ENCODE measurements at regions of chr16 and their contacts with region 1.

Region 1: DNA sequence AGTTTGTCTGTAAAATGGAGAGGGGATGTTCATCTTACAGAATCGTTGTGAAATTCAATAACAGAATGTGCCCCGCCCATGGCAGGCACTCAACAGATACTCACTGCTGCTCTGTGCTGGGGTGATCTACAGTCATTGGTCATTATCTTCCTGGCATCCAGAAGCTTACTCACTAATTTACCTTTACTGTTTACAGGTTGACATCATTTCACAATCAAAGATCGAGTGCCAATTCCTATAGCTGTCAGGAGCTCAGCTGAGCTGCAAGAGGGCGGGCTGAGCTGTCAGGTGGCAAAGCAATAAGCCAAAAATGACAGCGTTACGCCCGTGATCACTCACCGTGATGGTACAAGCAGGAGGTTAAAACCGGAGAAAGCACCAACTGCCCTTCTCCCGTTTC is 51.2 kb downstream of the LITAF start:
- DNase-seq: no peak
- ATAC-seq: no peak
- H3K4me3 ChIP-seq: no peak overlapping the region
- H3K4me3 Mint-ChIP-seq: no peak overlapping the region
- H3K27ac ChIP-seq: no peak overlapping the region
- H3K27ac Mint-ChIP-seq: no peak overlapping the region
- H3K4me1 ChIP-seq: peaks cover 5% of the 10 kb centered on the region
- H3K4me1 Mint-ChIP-seq: peaks cover 16% of the 10 kb centered on the region
- H3K27me3 ChIP-seq: no peaks in the 10 kb centered on the region
- H3K27me3 Mint-ChIP-seq: no peaks in the 10 kb centered on the region
- CTCF ChIP-seq: no peak

Region 2: DNA sequence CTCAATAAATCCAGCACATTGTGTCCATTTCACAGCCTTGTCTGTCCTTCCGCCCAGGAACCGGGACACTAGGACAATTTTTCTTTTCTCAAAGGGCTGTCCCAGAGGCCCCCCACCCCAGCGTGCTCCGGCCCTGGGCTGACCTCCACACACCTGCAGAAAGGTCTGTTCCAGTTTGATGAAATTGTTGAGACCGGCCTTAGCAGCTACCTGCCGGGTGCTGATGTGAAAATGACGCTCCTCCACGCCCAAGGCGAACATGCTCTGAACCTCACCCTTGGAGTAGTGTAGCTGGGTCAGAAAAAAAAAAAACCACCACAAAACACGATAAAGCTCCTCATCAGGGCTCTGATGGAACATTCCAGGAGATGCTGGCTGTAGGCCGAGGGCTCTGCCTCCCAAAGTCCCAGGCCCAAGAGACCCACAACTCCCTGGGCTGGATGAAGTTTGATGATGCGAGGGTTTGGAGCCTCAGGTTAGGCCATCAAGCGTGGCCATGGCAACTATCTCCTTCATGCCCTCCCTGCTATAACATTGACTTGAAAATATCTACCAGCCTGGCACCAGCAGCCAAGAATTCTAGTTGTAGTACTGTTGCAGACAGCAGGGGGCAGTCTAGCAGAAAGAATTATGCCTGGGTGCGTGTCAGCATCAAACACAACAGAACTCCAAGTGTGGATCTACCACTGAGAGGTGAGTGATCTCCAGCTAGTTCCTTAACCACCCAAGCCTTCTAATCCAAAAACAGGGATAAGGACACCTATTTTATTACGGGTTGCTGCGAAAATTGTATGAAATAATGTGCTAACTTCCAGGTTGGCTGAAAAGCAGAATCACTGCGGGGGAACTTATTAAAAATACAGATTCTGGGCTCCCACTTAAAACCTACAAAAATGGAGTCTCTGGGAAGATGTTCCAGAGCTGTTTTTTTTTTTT is 128.2 kb before region 1 on chr16:
- CTCF ChIA-PET with region 1: no interaction called
- POLR2A ChIA-PET with region 1: no interaction called
- intact Hi-C with region 1: loop called in 1 of 2 experiments (anchors 5 kb)
- DNase-seq: peak; percentile 40 to 81 (median 54)
- ATAC-seq: peak; percentile 78
- H3K4me3 ChIP-seq: no peak overlapping the region
- H3K4me3 Mint-ChIP-seq: no peak overlapping the region
- H3K27ac ChIP-seq: no peak overlapping the region
- H3K27ac Mint-ChIP-seq: no peak overlapping the region
- H3K4me1 ChIP-seq: no peaks in the 10 kb centered on the region
- H3K4me1 Mint-ChIP-seq: no peaks in the 10 kb centered on the region
- H3K27me3 ChIP-seq: no peaks in the 10 kb centered on the region
- H3K27me3 Mint-ChIP-seq: no peaks in the 10 kb centered on the region
- CTCF ChIP-seq: peak; percentile 69

Region 3: GRCh38 chr16:11597239-11598101 is 62.0 kb after region 1 on chr16:
- CTCF ChIA-PET with region 1: interaction called, 12 read pairs
- POLR2A ChIA-PET with region 1: no interaction called
- intact Hi-C with region 1: no loop called
- DNase-seq: peak in 3 of 14 experiments; percentile 52 to 68 (median 57)
- ATAC-seq: peak; percentile 79
- H3K4me3 ChIP-seq: no peak overlapping the region
- H3K4me3 Mint-ChIP-seq: no peak overlapping the region
- H3K27ac ChIP-seq: peak overlapping the region in 1 of 2 donors; percentile 4
- H3K27ac Mint-ChIP-seq: peak overlapping the region; percentile 35
- H3K4me1 ChIP-seq: peaks cover 20% of the 10 kb centered on the region
- H3K4me1 Mint-ChIP-seq: peaks cover 29% of the 10 kb centered on the region
- H3K27me3 ChIP-seq: no peaks in the 10 kb centered on the region
- H3K27me3 Mint-ChIP-seq: no peaks in the 10 kb centered on the region
- CTCF ChIP-seq: no peak

Region 4: DNA sequence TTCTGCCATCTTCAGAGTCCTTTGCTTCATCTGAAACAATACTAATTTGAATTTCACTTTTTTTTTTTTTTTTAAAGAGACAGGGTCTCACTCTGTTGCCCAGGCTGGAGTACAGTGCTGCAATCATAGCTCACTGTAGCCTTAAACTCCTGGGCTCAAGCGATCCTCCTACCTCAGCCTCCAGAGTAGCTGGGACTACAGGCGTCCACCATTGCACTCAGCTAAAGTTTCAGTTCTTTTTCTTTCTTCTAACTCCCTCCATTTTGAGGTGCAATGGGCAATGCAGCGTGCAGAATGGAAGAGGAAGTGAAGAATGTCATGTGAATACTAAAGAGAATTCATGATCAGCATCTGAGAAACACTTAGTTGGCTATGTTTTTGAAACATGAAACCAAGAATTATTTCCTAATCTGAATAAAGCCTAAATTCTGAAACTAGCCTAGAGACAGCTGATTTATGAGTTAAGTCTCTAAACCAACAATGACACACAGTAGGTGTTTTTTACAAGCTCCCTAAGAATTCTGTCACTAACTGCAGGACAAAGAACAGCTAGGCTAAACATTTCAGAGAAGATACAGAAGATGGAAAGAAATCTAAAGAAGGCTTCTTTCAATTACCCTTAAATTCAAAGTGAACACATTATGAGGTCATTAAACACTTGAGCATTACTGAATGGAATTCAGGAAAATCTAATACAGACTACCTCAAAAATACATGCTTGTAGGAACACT is 153.7 kb after region 1 on chr16:
- CTCF ChIA-PET with region 1: interaction called, 14 read pairs
- POLR2A ChIA-PET with region 1: no interaction called
- intact Hi-C with region 1: no loop called
- DNase-seq: peak in 2 of 14 experiments; percentile 35 to 43
- ATAC-seq: peak; percentile 40
- H3K4me3 ChIP-seq: no peak overlapping the region
- H3K4me3 Mint-ChIP-seq: peak overlapping the region; percentile 51
- H3K27ac ChIP-seq: no peak overlapping the region
- H3K27ac Mint-ChIP-seq: peak overlapping the region; percentile 67
- H3K4me1 ChIP-seq: peaks cover 6% of the 10 kb centered on the region
- H3K4me1 Mint-ChIP-seq: peaks cover 44% of the 10 kb centered on the region
- H3K27me3 ChIP-seq: no peaks in the 10 kb centered on the region
- H3K27me3 Mint-ChIP-seq: no peaks in the 10 kb centered on the region
- CTCF ChIP-seq: no peak

Region 5: DNA sequence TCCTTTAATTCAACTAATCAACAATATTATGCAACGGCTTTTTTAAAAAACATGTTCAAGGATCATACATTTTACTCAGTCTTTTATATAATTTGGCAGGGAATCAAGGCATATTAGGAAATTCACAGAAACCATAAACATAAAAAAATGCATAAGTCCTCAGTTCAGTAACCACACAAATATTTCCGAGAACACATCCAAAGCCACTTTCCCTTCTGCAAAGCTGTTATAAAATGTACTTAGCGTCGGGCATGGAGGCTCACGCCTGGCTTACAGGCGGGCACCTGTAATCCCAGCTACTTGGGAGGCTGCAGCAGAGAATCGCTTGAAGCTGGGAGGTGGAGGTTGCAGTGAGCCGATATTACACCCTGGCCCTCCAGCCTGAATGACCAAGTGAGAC is 271.2 kb after region 1 on chr16:
- CTCF ChIA-PET with region 1: no interaction called
- POLR2A ChIA-PET with region 1: no interaction called
- intact Hi-C with region 1: loop called in 1 of 2 experiments (anchors 5 kb)
- DNase-seq: no peak
- ATAC-seq: no peak
- H3K4me3 ChIP-seq: no peak overlapping the region
- H3K4me3 Mint-ChIP-seq: no peak overlapping the region
- H3K27ac ChIP-seq: no peak overlapping the region
- H3K27ac Mint-ChIP-seq: no peak overlapping the region
- H3K4me1 ChIP-seq: peaks cover 8% of the 10 kb centered on the region
- H3K4me1 Mint-ChIP-seq: peaks cover 11% of the 10 kb centered on the region
- H3K27me3 ChIP-seq: no peaks in the 10 kb centered on the region
- H3K27me3 Mint-ChIP-seq: no peaks in the 10 kb centered on the region
- CTCF ChIP-seq: no peak

Measured in CD4-positive, alpha-beta T cell (primary cell).